ENCODE measurements at regions of chr20 and their contacts with region 1.

Region 1: GRCh38 chr20:63056236-63056948 is 49.6 kb upstream of the BHLHE23 start:
- DNase-seq: peak; percentile 60
- ATAC-seq: peak; percentile 83
- H3K4me3 Mint-ChIP-seq: no peak overlapping the region
- H3K27ac Mint-ChIP-seq: no peak overlapping the region
- H3K4me1 Mint-ChIP-seq: no peaks in the 10 kb centered on the region
- H3K27me3 Mint-ChIP-seq: peaks cover 7% of the 10 kb centered on the region
- CTCF ChIP-seq: peak; percentile 88

Region 2: DNA sequence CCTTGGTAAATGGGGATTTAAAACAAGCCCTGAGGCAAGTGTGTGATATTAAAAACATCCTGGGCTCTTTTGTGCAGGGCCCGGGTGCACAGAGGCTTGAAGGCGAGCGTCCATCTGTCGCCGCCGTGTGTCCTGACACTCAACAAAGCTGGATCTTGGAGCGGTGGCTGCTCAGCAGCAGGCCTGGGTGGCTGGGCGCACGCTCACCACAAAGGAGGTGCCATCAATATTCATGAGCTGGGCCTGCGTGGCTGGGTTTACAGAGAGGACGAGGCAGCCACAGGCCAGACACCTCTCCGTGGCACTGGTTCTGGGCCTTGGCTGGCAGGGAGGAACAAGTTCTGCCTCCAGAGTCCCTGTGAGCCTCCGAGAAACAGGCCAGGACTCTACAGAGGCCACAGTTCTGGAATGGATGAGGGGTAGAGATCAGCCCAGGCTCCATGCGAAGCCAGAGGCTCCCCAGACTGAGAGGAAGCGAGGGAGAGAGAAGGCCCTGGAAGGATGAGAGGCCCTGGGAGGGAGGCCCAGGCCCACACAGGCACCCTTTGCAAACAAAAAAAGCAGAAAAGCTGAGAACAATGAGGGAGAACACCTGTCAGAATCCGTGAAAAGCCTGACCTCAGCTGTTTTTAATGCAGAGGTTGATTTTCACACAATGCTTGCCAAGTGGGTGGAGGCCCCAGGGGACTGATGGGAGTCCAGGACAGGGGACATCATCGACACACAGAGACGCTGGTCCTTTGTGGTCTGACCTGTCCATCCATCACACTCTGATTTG is 71.5 kb before region 1 on chr20:
- CTCF ChIA-PET with region 1: no interaction called
- POLR2A ChIA-PET with region 1: no interaction called
- intact Hi-C with region 1: no loop called
- DNase-seq: no peak
- ATAC-seq: no peak
- H3K4me3 Mint-ChIP-seq: no peak overlapping the region
- H3K27ac Mint-ChIP-seq: no peak overlapping the region
- H3K4me1 Mint-ChIP-seq: peaks cover 25% of the 10 kb centered on the region
- H3K27me3 Mint-ChIP-seq: peaks cover 11% of the 10 kb centered on the region
- CTCF ChIP-seq: no peak

Region 3: GRCh38 chr20:62995898-62996595 is 60.3 kb before region 1 on chr20:
- CTCF ChIA-PET with region 1: no interaction called
- POLR2A ChIA-PET with region 1: no interaction called
- intact Hi-C with region 1: no loop called
- DNase-seq: no peak
- ATAC-seq: no peak
- H3K4me3 Mint-ChIP-seq: no peak overlapping the region
- H3K27ac Mint-ChIP-seq: no peak overlapping the region
- H3K4me1 Mint-ChIP-seq: peaks cover 4% of the 10 kb centered on the region
- H3K27me3 Mint-ChIP-seq: peaks cover 19% of the 10 kb centered on the region
- CTCF ChIP-seq: no peak

Region 4: GRCh38 chr20:63178889-63179686 is 122.7 kb after region 1 on chr20:
- CTCF ChIA-PET with region 1: interaction called, 13 read pairs
- POLR2A ChIA-PET with region 1: no interaction called
- intact Hi-C with region 1: loop called (anchors 2 kb)
- DNase-seq: peak; percentile 83
- ATAC-seq: peak; percentile 55
- H3K4me3 Mint-ChIP-seq: no peak overlapping the region
- H3K27ac Mint-ChIP-seq: no peak overlapping the region
- H3K4me1 Mint-ChIP-seq: peaks cover 12% of the 10 kb centered on the region
- H3K27me3 Mint-ChIP-seq: peaks cover 38% of the 10 kb centered on the region
- CTCF ChIP-seq: peak; percentile 67

Measured in activated CD8-positive, alpha-beta T cell treated with anti-CD3 and anti-CD28 coated beads for 36 hours (primary cell).